Activated CD8-positive, alpha-beta T cell treated with anti-CD3 and anti-CD28 coated beads, Interleukin-2, amount 10 ng/mL, durations not matched to agents 7 days and 5 days (primary cell): ENCODE measurements at regions of chr14 and their contacts with region 1.

Region 1: GRCh38 chr14:73759714-73760597 is 45.8 kb upstream of the PNMA1 start:
- DNase-seq: peak; percentile 96
- ATAC-seq: peak; percentile 86
- H3K4me3 Mint-ChIP-seq: peak overlapping the region; percentile 91
- H3K27ac Mint-ChIP-seq: peak overlapping the region; percentile 95
- H3K4me1 Mint-ChIP-seq: peaks cover 74% of the 10 kb centered on the region
- H3K27me3 Mint-ChIP-seq: no peaks in the 10 kb centered on the region

Region 2: GRCh38 chr14:73633116-73634010 is 126.6 kb before region 1 on chr14:
- CTCF ChIA-PET with region 1: no interaction called
- POLR2A ChIA-PET with region 1: no interaction called
- DNase-seq: peak; percentile 71
- ATAC-seq: peak; percentile 87
- H3K4me3 Mint-ChIP-seq: peak overlapping the region; percentile 53
- H3K27ac Mint-ChIP-seq: no peak overlapping the region
- H3K4me1 Mint-ChIP-seq: peaks cover 5% of the 10 kb centered on the region
- H3K27me3 Mint-ChIP-seq: peaks cover 8% of the 10 kb centered on the region

Region 3: GRCh38 chr14:73771848-73772638 is 12.1 kb after region 1 on chr14:
- CTCF ChIA-PET with region 1: interaction called, 36 read pairs
- POLR2A ChIA-PET with region 1: interaction called, 68 read pairs
- DNase-seq: peak; percentile 76
- ATAC-seq: peak; percentile 82
- H3K4me3 Mint-ChIP-seq: peak overlapping the region; percentile 34
- H3K27ac Mint-ChIP-seq: peak overlapping the region; percentile 77
- H3K4me1 Mint-ChIP-seq: peaks cover 71% of the 10 kb centered on the region
- H3K27me3 Mint-ChIP-seq: no peaks in the 10 kb centered on the region

Region 4: DNA sequence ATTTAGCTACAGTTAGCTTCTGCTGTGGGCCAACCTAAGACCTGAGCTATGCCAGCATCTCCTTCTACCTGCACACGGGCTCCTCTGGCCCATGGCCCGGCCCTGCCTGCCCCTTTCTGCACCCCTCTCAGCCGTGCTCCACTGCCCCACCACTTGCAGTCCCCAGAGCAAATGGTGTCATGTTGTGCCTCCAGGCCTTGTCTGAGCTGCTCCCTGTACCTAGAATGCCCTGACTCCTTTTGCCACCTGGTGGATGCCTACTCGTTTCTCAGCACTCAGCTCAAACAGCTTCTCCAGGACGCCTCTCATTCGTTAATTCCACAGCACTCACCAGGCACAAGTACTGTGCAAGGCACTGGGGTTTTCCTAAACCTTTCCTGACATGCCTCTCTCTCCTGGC is 17.4 kb after region 1 on chr14:
- CTCF ChIA-PET with region 1: interaction called, 36 read pairs
- POLR2A ChIA-PET with region 1: interaction called, 68 read pairs
- DNase-seq: no peak
- ATAC-seq: peak; percentile 16
- H3K4me3 Mint-ChIP-seq: no peak overlapping the region
- H3K27ac Mint-ChIP-seq: no peak overlapping the region
- H3K4me1 Mint-ChIP-seq: peaks cover 55% of the 10 kb centered on the region
- H3K27me3 Mint-ChIP-seq: no peaks in the 10 kb centered on the region

Region 5: DNA sequence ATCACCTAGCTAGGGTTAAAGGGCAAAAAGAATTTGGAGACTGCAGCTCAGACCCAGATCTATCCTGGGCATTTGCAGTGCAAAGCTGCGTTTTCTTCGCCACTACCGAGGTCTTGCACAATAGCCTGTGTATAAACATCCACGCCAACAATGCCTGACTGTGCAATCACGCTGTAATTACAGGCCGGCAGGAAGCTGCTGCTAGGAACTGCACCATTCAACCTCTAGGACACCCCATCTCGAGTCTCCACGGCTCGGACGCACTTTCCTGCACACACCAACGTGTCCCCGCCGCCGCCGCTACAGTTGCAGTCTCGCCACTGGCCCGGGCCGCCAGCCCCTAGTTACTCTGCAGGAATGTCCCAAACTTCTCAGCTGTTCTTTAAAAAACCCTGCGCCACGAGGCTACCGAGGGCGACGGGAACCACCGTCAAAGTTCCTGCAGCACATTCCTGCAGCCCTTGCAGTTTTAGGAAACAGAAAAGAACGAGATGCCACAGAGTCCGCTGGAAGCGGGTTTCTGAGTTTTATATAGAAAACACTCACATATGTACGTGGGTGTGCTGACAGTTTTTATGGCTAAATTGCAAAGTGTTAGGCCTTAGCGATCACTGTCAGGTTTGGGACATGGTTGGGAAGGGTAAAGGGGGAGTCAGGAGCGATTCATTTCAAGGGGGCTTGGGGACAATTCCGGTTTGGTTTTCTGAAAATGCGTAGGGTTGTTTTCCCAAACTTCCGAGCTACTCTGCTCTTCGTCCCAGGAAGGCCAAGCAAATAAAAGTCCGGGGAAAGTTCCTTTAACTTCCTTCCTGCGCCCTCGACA is 26.1 kb after region 1 on chr14:
- CTCF ChIA-PET with region 1: interaction called, 54 read pairs
- POLR2A ChIA-PET with region 1: interaction called, 177 read pairs
- DNase-seq: peak; percentile 83
- ATAC-seq: peak; percentile 68
- H3K4me3 Mint-ChIP-seq: peak overlapping the region; percentile 95
- H3K27ac Mint-ChIP-seq: peak overlapping the region; percentile 94
- H3K4me1 Mint-ChIP-seq: peaks cover 57% of the 10 kb centered on the region
- H3K27me3 Mint-ChIP-seq: no peaks in the 10 kb centered on the region

Region 6: DNA sequence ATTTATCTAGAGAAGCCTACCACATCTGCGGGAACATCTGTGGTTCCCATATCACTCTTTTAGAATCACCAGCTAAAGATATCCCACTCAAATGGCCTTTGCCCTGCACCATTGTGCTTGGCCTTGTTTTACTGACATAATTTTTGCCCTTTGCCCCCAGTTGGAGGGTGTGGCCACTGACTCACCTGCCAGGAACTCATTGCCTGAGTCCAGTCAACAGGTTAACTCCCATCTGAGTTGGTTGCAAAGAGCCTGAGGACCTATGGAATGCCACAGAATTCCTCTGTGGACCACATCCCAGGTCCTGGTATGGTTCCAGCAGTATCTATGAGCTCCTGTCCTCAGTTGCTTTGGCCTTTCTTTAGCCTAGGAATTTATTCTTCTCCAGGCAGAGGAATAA is 36.0 kb after region 1 on chr14:
- CTCF ChIA-PET with region 1: interaction called, 12 read pairs
- POLR2A ChIA-PET with region 1: interaction called, 8 read pairs
- DNase-seq: no peak
- ATAC-seq: no peak
- H3K4me3 Mint-ChIP-seq: no peak overlapping the region
- H3K27ac Mint-ChIP-seq: no peak overlapping the region
- H3K4me1 Mint-ChIP-seq: no peaks in the 10 kb centered on the region
- H3K27me3 Mint-ChIP-seq: no peaks in the 10 kb centered on the region

Region 7: GRCh38 chr14:73825551-73826188 is 65.7 kb after region 1 on chr14:
- CTCF ChIA-PET with region 1: interaction called, 54 read pairs
- POLR2A ChIA-PET with region 1: interaction called, 6 read pairs
- DNase-seq: peak; percentile 77
- ATAC-seq: peak; percentile 91
- H3K4me3 Mint-ChIP-seq: no peak overlapping the region
- H3K27ac Mint-ChIP-seq: no peak overlapping the region
- H3K4me1 Mint-ChIP-seq: peaks cover 21% of the 10 kb centered on the region
- H3K27me3 Mint-ChIP-seq: peaks cover 3% of the 10 kb centered on the region